ENCODE measurements at regions of chr5 and their contacts with region 1.

Region 1: GRCh38 chr5:137629646-137630045 is 106.2 kb downstream of the KLHL3 start:
- DNase-seq: peak; percentile 42 to 76 (median 47)
- H3K4me3 ChIP-seq: no peak overlapping the region
- H3K4me3 Mint-ChIP-seq: no peak overlapping the region
- H3K27ac ChIP-seq: no peak overlapping the region
- H3K27ac Mint-ChIP-seq: no peak overlapping the region
- H3K4me1 ChIP-seq: peaks cover 0 to 7% of the 10 kb centered on the region in 2 donors
- H3K4me1 Mint-ChIP-seq: peaks cover 8% of the 10 kb centered on the region
- H3K27me3 ChIP-seq: no peaks in the 10 kb centered on the region
- H3K27me3 Mint-ChIP-seq: peaks cover 0 to 3% (median 0%) of the 10 kb centered on the region in 3 donors
- CTCF ChIP-seq: peak; percentile 95

Region 2: GRCh38 chr5:137743031-137743640 is 113.5 kb after region 1 on chr5:
- intact Hi-C with region 1: loop called (anchors 2 kb)
- DNase-seq: peak; percentile 46 to 66 (median 55)
- H3K4me3 ChIP-seq: no peak overlapping the region
- H3K4me3 Mint-ChIP-seq: no peak overlapping the region
- H3K27ac ChIP-seq: no peak overlapping the region
- H3K27ac Mint-ChIP-seq: no peak overlapping the region
- H3K4me1 ChIP-seq: no peaks in the 10 kb centered on the region
- H3K4me1 Mint-ChIP-seq: peaks cover 3% of the 10 kb centered on the region
- H3K27me3 ChIP-seq: no peaks in the 10 kb centered on the region
- H3K27me3 Mint-ChIP-seq: peaks cover 0 to 7% (median 0%) of the 10 kb centered on the region in 3 donors
- CTCF ChIP-seq: peak; percentile 70

Region 3: GRCh38 chr5:137778772-137779564 is 149.3 kb after region 1 on chr5:
- intact Hi-C with region 1: no loop called
- DNase-seq: peak; percentile 6 to 23 (median 16)
- H3K4me3 ChIP-seq: no peak overlapping the region
- H3K4me3 Mint-ChIP-seq: no peak overlapping the region
- H3K27ac ChIP-seq: no peak overlapping the region
- H3K27ac Mint-ChIP-seq: no peak overlapping the region
- H3K4me1 ChIP-seq: no peaks in the 10 kb centered on the region
- H3K4me1 Mint-ChIP-seq: no peaks in the 10 kb centered on the region
- H3K27me3 ChIP-seq: no peaks in the 10 kb centered on the region
- H3K27me3 Mint-ChIP-seq: peaks cover 0 to 3% (median 1%) of the 10 kb centered on the region in 3 donors
- CTCF ChIP-seq: peak; percentile 78

Region 4: GRCh38 chr5:138065102-138065501 is 435.5 kb after region 1 on chr5:
- intact Hi-C with region 1: loop called in 1 of 2 experiments (anchors 10 kb)
- DNase-seq: no peak
- H3K4me3 ChIP-seq: no peak overlapping the region
- H3K4me3 Mint-ChIP-seq: no peak overlapping the region
- H3K27ac ChIP-seq: no peak overlapping the region
- H3K27ac Mint-ChIP-seq: no peak overlapping the region
- H3K4me1 ChIP-seq: peaks cover 10% of the 10 kb centered on the region in 2 donors
- H3K4me1 Mint-ChIP-seq: peaks cover 22% of the 10 kb centered on the region
- H3K27me3 ChIP-seq: no peaks in the 10 kb centered on the region
- H3K27me3 Mint-ChIP-seq: peaks cover 0 to 9% (median 3%) of the 10 kb centered on the region in 3 donors
- CTCF ChIP-seq: no peak

Region 5: GRCh38 chr5:138132543-138132942 is 502.9 kb after region 1 on chr5:
- intact Hi-C with region 1: loop called (anchors 5 to 10 kb)
- DNase-seq: no peak
- H3K4me3 ChIP-seq: no peak overlapping the region
- H3K4me3 Mint-ChIP-seq: no peak overlapping the region
- H3K27ac ChIP-seq: no peak overlapping the region
- H3K27ac Mint-ChIP-seq: no peak overlapping the region
- H3K4me1 ChIP-seq: peaks cover 0 to 6% of the 10 kb centered on the region in 2 donors
- H3K4me1 Mint-ChIP-seq: peaks cover 7% of the 10 kb centered on the region
- H3K27me3 ChIP-seq: peaks cover 5 to 10% of the 10 kb centered on the region in 2 donors
- H3K27me3 Mint-ChIP-seq: peaks cover 5 to 31% (median 12%) of the 10 kb centered on the region in 3 donors
- CTCF ChIP-seq: no peak

Region 6: GRCh38 chr5:138138949-138139780 is 509.5 kb after region 1 on chr5 and contains the start of gene NME5:
- intact Hi-C with region 1: loop called (anchors 5 to 10 kb)
- DNase-seq: peak in 1 of 3 donors; percentile 7
- H3K4me3 ChIP-seq: no peak within 1 kb of the TSS
- H3K4me3 Mint-ChIP-seq: peak within 1 kb of the TSS; percentile 6 to 79
- H3K27ac ChIP-seq: no peak within 1 kb of the TSS
- H3K27ac Mint-ChIP-seq: no peak within 1 kb of the TSS
- H3K4me1 ChIP-seq: peaks cover 9 to 11% of the 10 kb centered on the region in 2 donors
- H3K4me1 Mint-ChIP-seq: peaks cover 12% of the 10 kb centered on the region
- H3K27me3 ChIP-seq: peaks cover 34 to 47% of the 10 kb centered on the region in 2 donors
- H3K27me3 Mint-ChIP-seq: peaks cover 38 to 56% (median 49%) of the 10 kb centered on the region in 3 donors
- CTCF ChIP-seq: no peak
- polyA plus RNA-seq, gene NME5: not detected